Heart left ventricle (tissue), 16 donors: ENCODE measurements at regions of chr5 and their contacts with region 1.

Region 1: GRCh38 chr5:173163219-173163618 is 18.9 kb downstream of the BNIP1 start:
- DNase-seq: peak in 4 of 5 donors; percentile 38 to 64 (median 48)
- ATAC-seq: peak; percentile 38 to 70 (median 49)
- H3K4me3 ChIP-seq: no peak overlapping the region
- H3K27ac ChIP-seq: peak overlapping the region in 10 of 12 donors; percentile 11 to 86 (median 50)
- H3K4me1 ChIP-seq: peaks cover 0 to 37% (median 13%) of the 10 kb centered on the region in 12 donors
- H3K27me3 ChIP-seq: no peaks in the 10 kb centered on the region
- CTCF ChIP-seq: peak in 3 of 12 donors; percentile 6 to 23 (median 8)
- POLR2A ChIP-seq: no peak

Region 2: GRCh38 chr5:173198049-173198448 is 34.8 kb after region 1 on chr5:
- intact Hi-C with region 1: loop called in 1 of 10 experiments (anchors 2 kb)
- DNase-seq: peak in 4 of 5 donors; percentile 28 to 57 (median 44)
- ATAC-seq: peak in 3 of 4 donors; percentile 60 to 65 (median 60)
- H3K4me3 ChIP-seq: no peak overlapping the region
- H3K27ac ChIP-seq: peak overlapping the region in 6 of 12 donors; percentile 49 to 68 (median 56)
- H3K4me1 ChIP-seq: peaks cover 0 to 21% (median 5%) of the 10 kb centered on the region in 12 donors
- H3K27me3 ChIP-seq: peaks cover 0 to 23% (median 0%) of the 10 kb centered on the region in 9 donors
- CTCF ChIP-seq: no peak
- POLR2A ChIP-seq: no peak

Region 3: GRCh38 chr5:173232499-173233346 is 69.5 kb after region 1 on chr5:
- intact Hi-C with region 1: loop called in 8 of 10 experiments (anchors 2 to 10 kb)
- DNase-seq: peak in 1 of 5 donors; percentile 34
- ATAC-seq: no peak
- H3K4me3 ChIP-seq: peak overlapping the region; percentile 47 to 93 (median 63)
- H3K27ac ChIP-seq: peak overlapping the region in 11 of 12 donors; percentile 46 to 95 (median 89)
- H3K4me1 ChIP-seq: peaks cover 0 to 58% (median 26%) of the 10 kb centered on the region in 12 donors
- H3K27me3 ChIP-seq: peaks cover 14 to 98% (median 69%) of the 10 kb centered on the region in 9 donors
- CTCF ChIP-seq: no peak
- POLR2A ChIP-seq: no peak

Region 4: DNA sequence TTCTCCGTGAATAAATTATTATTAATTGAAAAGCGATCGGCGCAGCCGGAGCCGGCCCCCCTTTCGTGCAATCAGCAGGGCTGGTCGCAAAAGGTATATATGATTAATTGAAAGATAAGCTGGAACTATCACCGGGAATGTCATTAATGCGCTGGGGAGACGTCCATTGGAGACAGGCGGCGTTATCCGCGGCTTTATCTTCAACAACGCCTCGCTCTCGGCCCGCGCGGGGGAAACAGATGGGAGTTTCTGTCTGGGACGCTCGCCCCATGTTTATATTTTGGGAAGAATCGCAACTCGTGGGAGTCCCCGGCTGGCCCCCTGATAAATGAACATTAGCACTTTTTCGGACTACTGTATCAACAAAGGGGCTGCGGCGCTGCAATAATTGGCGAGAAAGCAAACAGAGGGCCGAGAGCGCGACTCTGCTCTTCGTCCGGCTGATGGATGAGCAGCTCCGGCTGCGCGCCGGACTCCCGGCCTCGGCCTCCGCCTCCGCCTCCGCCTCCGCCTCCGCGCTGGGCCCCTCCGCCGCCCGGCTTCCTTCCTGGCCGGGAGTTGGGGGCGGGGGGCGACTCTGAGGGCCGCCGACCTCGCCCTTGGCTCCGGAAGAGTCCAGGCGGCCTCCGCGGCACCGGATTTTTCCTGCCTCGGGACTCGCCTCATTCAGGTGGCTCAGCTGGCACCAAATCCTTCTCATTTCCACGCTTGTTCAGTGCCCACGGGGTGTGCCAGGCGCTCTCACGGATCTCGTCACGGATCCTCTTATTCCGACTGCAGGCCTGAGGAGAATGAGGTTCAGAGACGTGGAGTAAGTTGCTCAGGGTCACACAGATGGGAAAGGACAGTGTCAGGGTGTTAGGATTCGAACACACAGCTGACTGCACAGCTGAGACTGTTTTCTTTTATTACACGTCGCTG is 75.4 kb after region 1 on chr5:
- intact Hi-C with region 1: loop called in 4 of 10 experiments (anchors 5 to 10 kb)
- DNase-seq: peak in 1 of 5 donors; percentile 29
- ATAC-seq: no peak
- H3K4me3 ChIP-seq: peak overlapping the region; percentile 32 to 62 (median 46)
- H3K27ac ChIP-seq: peak overlapping the region; percentile 33 to 95 (median 85)
- H3K4me1 ChIP-seq: peaks cover 0 to 50% (median 16%) of the 10 kb centered on the region in 12 donors
- H3K27me3 ChIP-seq: peaks cover 16 to 99% (median 68%) of the 10 kb centered on the region in 9 donors
- CTCF ChIP-seq: no peak
- POLR2A ChIP-seq: no peak